Transverse colon (tissue), 4 donors: ENCODE measurements at regions of chr17 and their contacts with region 1.

Region 1: DNA sequence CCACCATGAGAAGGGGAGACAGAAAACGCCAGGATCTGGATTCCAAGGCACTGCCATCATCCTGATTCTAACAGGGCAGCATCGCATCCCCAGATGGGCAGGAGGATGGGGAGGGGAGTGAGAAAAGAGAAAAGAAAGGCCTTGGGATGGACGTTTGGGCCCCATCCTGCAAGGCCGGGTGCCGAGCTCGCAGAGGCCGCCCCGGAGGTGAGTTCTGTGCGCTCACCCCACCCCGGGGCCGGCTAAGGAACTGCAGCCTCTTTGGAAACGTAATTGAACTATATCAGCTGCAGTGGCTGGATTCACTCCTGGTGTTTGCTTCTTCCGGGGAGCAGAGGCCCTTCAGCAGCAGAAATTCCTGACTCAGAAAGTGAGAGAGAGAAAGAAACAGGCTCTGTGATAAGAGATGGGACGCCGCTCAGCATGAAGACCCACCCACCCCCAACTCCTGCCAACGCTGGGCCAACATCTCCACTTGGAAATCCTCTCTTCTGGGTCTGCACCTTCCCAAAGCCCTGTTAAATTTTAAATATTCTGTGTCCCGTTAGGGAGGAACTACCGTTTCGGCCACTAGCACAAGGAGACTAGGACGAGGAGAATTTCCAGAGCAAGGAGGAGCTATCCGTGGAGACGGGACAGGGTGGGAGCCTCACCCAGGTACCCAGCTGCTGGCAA is 8.5 kb upstream of the SSTR2 start:
- DNase-seq: peak; percentile 67
- H3K4me3 ChIP-seq: no peak overlapping the region
- H3K27ac ChIP-seq: no peak overlapping the region
- H3K4me1 ChIP-seq: peaks cover 0 to 18% (median 3%) of the 10 kb centered on the region in 4 donors
- H3K27me3 ChIP-seq: peaks cover 45% of the 10 kb centered on the region
- CTCF ChIP-seq: peak; percentile 69 to 84 (median 75)
- EP300 ChIP-seq: no peak
- POLR2A ChIP-seq: no peak

Region 2: GRCh38 chr17:72985881-72986720 is 170.2 kb before region 1 on chr17:
- in situ Hi-C with region 1: loop called in 2 of 4 experiments (anchors 25 kb)
- intact Hi-C with region 1: no loop called
- DNase-seq: peak; percentile 57
- H3K4me3 ChIP-seq: no peak overlapping the region
- H3K27ac ChIP-seq: no peak overlapping the region
- H3K4me1 ChIP-seq: no peaks in the 10 kb centered on the region
- H3K27me3 ChIP-seq: no peaks in the 10 kb centered on the region
- CTCF ChIP-seq: peak; percentile 57 to 84 (median 74)
- EP300 ChIP-seq: no peak
- POLR2A ChIP-seq: no peak

Region 3: GRCh38 chr17:73089322-73090317 is 66.7 kb before region 1 on chr17:
- in situ Hi-C with region 1: no loop called
- intact Hi-C with region 1: no loop called
- DNase-seq: no peak
- H3K4me3 ChIP-seq: no peak overlapping the region
- H3K27ac ChIP-seq: no peak overlapping the region
- H3K4me1 ChIP-seq: peaks cover 4 to 31% (median 17%) of the 10 kb centered on the region in 4 donors
- H3K27me3 ChIP-seq: no peaks in the 10 kb centered on the region
- CTCF ChIP-seq: no peak
- EP300 ChIP-seq: no peak
- POLR2A ChIP-seq: no peak

Region 4: DNA sequence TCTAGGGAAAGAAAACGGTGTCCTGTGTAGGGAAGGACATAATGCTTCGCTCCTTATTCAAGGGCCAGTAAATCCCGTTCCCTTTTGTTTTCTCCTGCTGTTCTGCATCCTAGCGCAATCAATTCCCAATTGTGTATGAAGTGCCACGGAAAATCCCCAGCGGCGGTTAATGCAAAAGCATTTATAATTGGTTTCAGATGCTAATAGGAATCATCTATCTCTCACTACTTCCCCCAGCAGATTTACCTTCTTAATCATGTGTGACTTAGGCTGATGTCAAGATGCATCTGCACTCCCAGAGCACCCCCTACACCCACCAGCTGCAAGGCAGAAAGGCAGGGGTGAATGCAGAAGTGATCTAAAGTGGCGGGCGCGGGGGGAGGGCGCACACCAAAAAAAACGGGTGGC is 24.2 kb before region 1 on chr17:
- in situ Hi-C with region 1: no loop called
- intact Hi-C with region 1: no loop called
- DNase-seq: no peak
- H3K4me3 ChIP-seq: no peak overlapping the region
- H3K27ac ChIP-seq: no peak overlapping the region
- H3K4me1 ChIP-seq: no peaks in the 10 kb centered on the region
- H3K27me3 ChIP-seq: no peaks in the 10 kb centered on the region
- CTCF ChIP-seq: no peak
- EP300 ChIP-seq: no peak
- POLR2A ChIP-seq: no peak

Region 5: GRCh38 chr17:73291260-73291801 is 135.0 kb after region 1 on chr17:
- in situ Hi-C with region 1: no loop called
- intact Hi-C with region 1: no loop called
- DNase-seq: peak; percentile 76
- H3K4me3 ChIP-seq: no peak overlapping the region
- H3K27ac ChIP-seq: peak overlapping the region; percentile 83 to 90 (median 86)
- H3K4me1 ChIP-seq: peaks cover 67 to 94% (median 73%) of the 10 kb centered on the region in 4 donors
- H3K27me3 ChIP-seq: no peaks in the 10 kb centered on the region
- CTCF ChIP-seq: no peak
- EP300 ChIP-seq: no peak
- POLR2A ChIP-seq: no peak